Calu3 (cell line): ENCODE measurements at regions of chr1 and their contacts with region 1.

Region 1: GRCh38 chr1:241895013-241895412 is 47.0 kb downstream of the EXO1 start:
- DNase-seq: no peak
- H3K4me3 Mint-ChIP-seq: no peak overlapping the region
- H3K27ac Mint-ChIP-seq: peak overlapping the region; percentile 29
- H3K4me1 Mint-ChIP-seq: no peaks in the 10 kb centered on the region
- H3K27me3 Mint-ChIP-seq: no peaks in the 10 kb centered on the region
- CTCF ChIP-seq: no peak

Region 2: DNA sequence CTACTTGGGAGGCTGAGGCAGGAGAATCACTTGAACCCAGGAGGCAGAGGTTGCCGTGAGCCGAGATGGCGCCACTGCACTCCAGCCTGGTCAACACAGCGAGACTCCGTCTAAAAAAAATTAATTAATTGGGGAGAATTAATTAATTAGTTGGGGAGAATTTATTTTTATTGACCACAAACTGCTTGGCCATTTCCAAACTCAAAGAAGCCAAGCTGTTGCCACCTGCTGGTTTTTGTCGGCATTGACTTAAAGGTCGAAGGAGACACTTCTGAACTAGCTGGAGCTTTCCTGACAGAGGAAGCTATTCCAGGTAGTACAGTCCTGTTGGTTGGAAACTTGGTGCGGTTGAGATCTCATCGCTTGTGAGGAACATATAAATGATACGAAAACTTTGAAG is 90.8 kb after region 1 on chr1:
- CTCF ChIA-PET with region 1: interaction called, 20 read pairs
- intact Hi-C with region 1: loop called (anchors 1 kb)
- DNase-seq: peak; percentile 60
- H3K4me3 Mint-ChIP-seq: no peak overlapping the region
- H3K27ac Mint-ChIP-seq: no peak overlapping the region
- H3K4me1 Mint-ChIP-seq: peaks cover 13% of the 10 kb centered on the region
- H3K27me3 Mint-ChIP-seq: no peaks in the 10 kb centered on the region
- CTCF ChIP-seq: peak; percentile 58

Region 3: GRCh38 chr1:242017584-242018233 is 122.7 kb after region 1 on chr1:
- CTCF ChIA-PET with region 1: no interaction called
- intact Hi-C with region 1: loop called (anchors 1 kb)
- DNase-seq: peak; percentile 64
- H3K4me3 Mint-ChIP-seq: no peak overlapping the region
- H3K27ac Mint-ChIP-seq: no peak overlapping the region
- H3K4me1 Mint-ChIP-seq: no peaks in the 10 kb centered on the region
- H3K27me3 Mint-ChIP-seq: no peaks in the 10 kb centered on the region
- CTCF ChIP-seq: peak; percentile 71

Region 4: GRCh38 chr1:242448910-242449645 is 554.1 kb after region 1 on chr1:
- CTCF ChIA-PET with region 1: no interaction called
- intact Hi-C with region 1: loop called (anchors 10 kb)
- DNase-seq: no peak
- H3K4me3 Mint-ChIP-seq: no peak overlapping the region
- H3K27ac Mint-ChIP-seq: no peak overlapping the region
- H3K4me1 Mint-ChIP-seq: no peaks in the 10 kb centered on the region
- H3K27me3 Mint-ChIP-seq: peaks cover 23% of the 10 kb centered on the region
- CTCF ChIP-seq: no peak